Sigmoid colon (tissue), 7 donors: ENCODE measurements at regions of chr11 and their contacts with region 1.

Region 1: GRCh38 chr11:44936525-44936924 is 14.2 kb downstream of the TP53I11 start:
- DNase-seq: peak; percentile 89
- H3K4me3 ChIP-seq: no peak overlapping the region
- H3K27ac ChIP-seq: no peak overlapping the region
- H3K4me1 ChIP-seq: peaks cover 0 to 16% (median 8%) of the 10 kb centered on the region in 4 donors
- H3K27me3 ChIP-seq: no peaks in the 10 kb centered on the region
- CTCF ChIP-seq: peak; percentile 85 to 95 (median 95)
- EP300 ChIP-seq: no peak
- POLR2A ChIP-seq: no peak

Region 2: DNA sequence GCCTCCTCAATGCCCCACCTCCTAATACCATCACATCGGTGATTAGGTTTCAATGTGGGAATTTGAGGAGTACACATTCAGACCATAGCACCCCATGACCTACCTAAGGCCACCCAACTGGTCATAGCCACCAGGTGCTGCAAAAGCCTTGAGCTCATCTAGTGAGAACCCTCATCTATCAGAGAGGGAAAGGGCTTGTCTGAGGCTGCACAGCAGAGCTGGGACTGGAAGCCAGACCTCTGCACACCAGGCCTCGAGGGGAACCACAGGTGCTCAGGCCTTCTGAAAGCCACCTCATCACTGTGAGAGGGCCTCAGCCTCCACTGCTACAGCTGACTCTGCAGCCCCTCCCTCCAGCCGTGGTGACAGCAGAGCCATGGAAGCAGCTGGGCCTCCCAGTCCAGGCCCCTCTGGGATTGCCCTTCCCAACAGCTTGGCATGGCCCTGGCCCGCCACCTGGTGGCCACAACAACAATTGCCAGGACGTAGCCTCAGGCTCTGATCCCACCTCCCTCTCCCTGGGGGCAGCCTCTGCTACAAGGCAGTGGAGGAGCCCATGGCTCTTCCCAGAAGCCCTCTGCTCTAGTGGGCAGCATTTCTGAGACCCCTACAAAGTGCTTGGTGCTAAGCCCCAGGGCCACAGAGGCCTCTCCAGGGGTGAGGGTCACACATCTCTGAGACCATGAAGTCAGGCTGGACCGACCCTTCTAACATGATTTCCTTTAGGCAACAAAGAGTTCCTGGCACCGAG is 168.9 kb after region 1 on chr11:
- intact Hi-C with region 1: loop called (anchors 1 kb)
- DNase-seq: peak; percentile 89
- H3K4me3 ChIP-seq: no peak overlapping the region
- H3K27ac ChIP-seq: no peak overlapping the region
- H3K4me1 ChIP-seq: peaks cover 0 to 8% (median 2%) of the 10 kb centered on the region in 4 donors
- H3K27me3 ChIP-seq: peaks cover 0 to 28% (median 4%) of the 10 kb centered on the region in 3 donors
- CTCF ChIP-seq: peak; percentile 73 to 97 (median 92)
- EP300 ChIP-seq: no peak
- POLR2A ChIP-seq: no peak